Mammary epithelial cell (primary cell): ENCODE measurements at regions of chr3 and their contacts with region 1.

Region 1: GRCh38 chr3:178443634-178444033 is 92.6 kb upstream of the KCNMB2 start:
- DNase-seq: no peak
- H3K4me3 ChIP-seq: no peak overlapping the region
- H3K27ac ChIP-seq: no peak overlapping the region
- H3K4me1 ChIP-seq: no peaks in the 10 kb centered on the region
- H3K27me3 ChIP-seq: no peaks in the 10 kb centered on the region
- CTCF ChIP-seq: peak in 1 of 2 donors; percentile 22

Region 2: GRCh38 chr3:178428039-178428438 is 15.6 kb before region 1 on chr3:
- CTCF ChIA-PET with region 1: no interaction called
- dilution Hi-C with region 1: no loop called
- in situ Hi-C with region 1: no loop called
- intact Hi-C with region 1: no loop called
- DNase-seq: no peak
- H3K4me3 ChIP-seq: no peak overlapping the region
- H3K27ac ChIP-seq: no peak overlapping the region
- H3K4me1 ChIP-seq: no peaks in the 10 kb centered on the region
- H3K27me3 ChIP-seq: no peaks in the 10 kb centered on the region
- CTCF ChIP-seq: no peak

Region 3: DNA sequence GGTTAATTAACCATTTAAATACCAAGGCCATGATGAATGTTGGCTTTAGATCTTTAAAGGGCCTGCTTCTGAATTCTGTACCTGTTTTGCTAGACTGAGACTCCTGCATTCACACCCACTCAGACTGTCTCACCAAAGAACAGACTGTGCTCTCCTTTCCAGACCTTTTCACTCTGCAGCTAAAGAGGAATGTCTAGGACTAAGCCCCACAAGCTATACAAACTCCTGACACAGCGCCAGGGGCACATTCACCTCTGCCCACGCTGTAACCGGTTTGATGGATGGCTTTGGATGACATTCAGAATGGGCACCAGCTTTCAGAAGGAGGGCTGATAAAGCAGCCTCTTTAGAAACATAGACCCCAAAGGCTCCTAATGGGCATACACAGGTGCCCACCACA is 292.7 kb after region 1 on chr3:
- CTCF ChIA-PET with region 1: no interaction called
- dilution Hi-C with region 1: no loop called
- in situ Hi-C with region 1: no loop called
- intact Hi-C with region 1: no loop called
- DNase-seq: no peak
- H3K4me3 ChIP-seq: no peak overlapping the region
- H3K27ac ChIP-seq: no peak overlapping the region
- H3K4me1 ChIP-seq: no peaks in the 10 kb centered on the region
- H3K27me3 ChIP-seq: no peaks in the 10 kb centered on the region
- CTCF ChIP-seq: no peak

Region 4: GRCh38 chr3:178950676-178951075 is 507.0 kb after region 1 on chr3:
- CTCF ChIA-PET with region 1: no interaction called
- dilution Hi-C with region 1: loop called (anchors 25 kb)
- in situ Hi-C with region 1: loop called (anchors 10 to 25 kb)
- intact Hi-C with region 1: no loop called
- DNase-seq: peak; percentile 85
- H3K4me3 ChIP-seq: no peak overlapping the region
- H3K27ac ChIP-seq: no peak overlapping the region
- H3K4me1 ChIP-seq: peaks cover 15% of the 10 kb centered on the region
- H3K27me3 ChIP-seq: no peaks in the 10 kb centered on the region
- CTCF ChIP-seq: no peak

Region 5: GRCh38 chr3:178966299-178967176 is 522.9 kb after region 1 on chr3:
- CTCF ChIA-PET with region 1: interaction called, 7 read pairs
- dilution Hi-C with region 1: loop called (anchors 25 kb)
- in situ Hi-C with region 1: loop called in 1 of 2 experiments (anchors 25 kb)
- intact Hi-C with region 1: loop called (anchors 2 kb)
- DNase-seq: peak; percentile 30
- H3K4me3 ChIP-seq: no peak overlapping the region
- H3K27ac ChIP-seq: no peak overlapping the region
- H3K4me1 ChIP-seq: peaks cover 1% of the 10 kb centered on the region
- H3K27me3 ChIP-seq: no peaks in the 10 kb centered on the region
- CTCF ChIP-seq: peak; percentile 54 to 64